K562 (cell line): ENCODE measurements at regions of chr10 and their contacts with region 1.

Region 1: DNA sequence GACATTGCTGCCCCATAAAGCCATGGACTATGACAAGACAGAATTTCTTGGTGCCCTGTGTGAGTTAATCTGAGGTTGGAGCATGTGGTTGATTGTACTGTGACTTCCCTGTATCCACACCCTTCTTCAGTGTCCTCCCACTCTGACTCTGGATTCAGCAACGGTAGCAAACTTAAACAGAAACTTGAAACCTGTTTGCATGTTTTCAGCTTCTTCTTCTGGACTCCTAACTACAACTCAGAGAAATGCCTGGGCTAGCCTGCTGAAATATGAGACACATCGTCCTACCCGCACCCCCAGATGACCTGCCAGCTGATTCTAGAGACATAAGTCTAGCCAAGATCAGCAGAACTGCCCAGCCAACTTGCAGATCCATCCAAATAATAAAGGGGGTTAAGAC is 78.4 kb downstream of the IPMK start:
- DNase-seq: peak in 1 of 4 experiments; percentile 18
- ATAC-seq: peak; percentile 78
- H3K4me3 ChIP-seq: no peak overlapping the region
- H3K27ac ChIP-seq: no peak overlapping the region
- H3K4me1 ChIP-seq: 0 out of 5 replicates have a peak, but pooled peaks cover 0 to 4% of the 10 kb centered on the region in 2 experiments
- H3K27me3 ChIP-seq: 0 out of 5 replicates have a peak, but pooled peaks cover 0 to 4% of the 10 kb centered on the region in 2 experiments
- CTCF ChIP-seq: no peak
- EP300 ChIP-seq: no peak
- POLR2A ChIP-seq: no peak
- RAD21 ChIP-seq: no peak; a peak in 1 of 4 replicates

Region 2: GRCh38 chr10:57506414-57507094 is 682.7 kb before region 1 on chr10:
- CTCF ChIA-PET with region 1: no interaction called
- POLR2A ChIA-PET with region 1: no interaction called
- in situ Hi-C with region 1: no loop called
- intact Hi-C with region 1: no loop called
- DNase-seq: no peak
- ATAC-seq: no peak
- H3K4me3 ChIP-seq: no peak overlapping the region
- H3K27ac ChIP-seq: no peak overlapping the region
- H3K4me1 ChIP-seq: no peaks in the 10 kb centered on the region
- H3K27me3 ChIP-seq: no peaks in the 10 kb centered on the region
- CTCF ChIP-seq: no peak
- EP300 ChIP-seq: no peak
- POLR2A ChIP-seq: no peak
- RAD21 ChIP-seq: no peak

Region 3: GRCh38 chr10:58070956-58071355 is 118.3 kb before region 1 on chr10:
- CTCF ChIA-PET with region 1: no interaction called
- POLR2A ChIA-PET with region 1: no interaction called
- in situ Hi-C with region 1: no loop called
- intact Hi-C with region 1: no loop called
- DNase-seq: no peak
- ATAC-seq: no peak
- H3K4me3 ChIP-seq: no peak overlapping the region
- H3K27ac ChIP-seq: no peak overlapping the region
- H3K4me1 ChIP-seq: no peaks in the 10 kb centered on the region
- H3K27me3 ChIP-seq: no peaks in the 10 kb centered on the region
- CTCF ChIP-seq: no peak
- EP300 ChIP-seq: no peak
- POLR2A ChIP-seq: no peak
- RAD21 ChIP-seq: no peak

Region 4: GRCh38 chr10:58291538-58292174 is 102.4 kb after region 1 on chr10:
- CTCF ChIA-PET with region 1: no interaction called
- POLR2A ChIA-PET with region 1: no interaction called
- in situ Hi-C with region 1: loop called (anchors 5 kb)
- intact Hi-C with region 1: no loop called
- DNase-seq: peak; percentile 24 to 60 (median 38)
- ATAC-seq: peak; percentile 87
- H3K4me3 ChIP-seq: no peak overlapping the region
- H3K27ac ChIP-seq: no peak overlapping the region
- H3K4me1 ChIP-seq: no peaks in the 10 kb centered on the region
- H3K27me3 ChIP-seq: no peaks in the 10 kb centered on the region
- CTCF ChIP-seq: peak; percentile 63 to 93 (median 66)
- EP300 ChIP-seq: no peak
- POLR2A ChIP-seq: no peak
- RAD21 ChIP-seq: peak; percentile 91 to 97